ENCODE measurements at regions of chr2 and their contacts with region 1.

Region 1: GRCh38 chr2:208254871-208255556 is at the start of gene IDH1:
- DNase-seq: peak; percentile 96
- H3K4me3 Mint-ChIP-seq: peak within 1 kb of the TSS; percentile 86
- H3K27ac Mint-ChIP-seq: peak within 1 kb of the TSS; percentile 55
- H3K4me1 Mint-ChIP-seq: peaks cover 18% of the 10 kb centered on the region
- H3K27me3 Mint-ChIP-seq: no peaks in the 10 kb centered on the region
- total RNA-seq, gene IDH1: 18.5 to 21.9 TPM

Region 2: DNA sequence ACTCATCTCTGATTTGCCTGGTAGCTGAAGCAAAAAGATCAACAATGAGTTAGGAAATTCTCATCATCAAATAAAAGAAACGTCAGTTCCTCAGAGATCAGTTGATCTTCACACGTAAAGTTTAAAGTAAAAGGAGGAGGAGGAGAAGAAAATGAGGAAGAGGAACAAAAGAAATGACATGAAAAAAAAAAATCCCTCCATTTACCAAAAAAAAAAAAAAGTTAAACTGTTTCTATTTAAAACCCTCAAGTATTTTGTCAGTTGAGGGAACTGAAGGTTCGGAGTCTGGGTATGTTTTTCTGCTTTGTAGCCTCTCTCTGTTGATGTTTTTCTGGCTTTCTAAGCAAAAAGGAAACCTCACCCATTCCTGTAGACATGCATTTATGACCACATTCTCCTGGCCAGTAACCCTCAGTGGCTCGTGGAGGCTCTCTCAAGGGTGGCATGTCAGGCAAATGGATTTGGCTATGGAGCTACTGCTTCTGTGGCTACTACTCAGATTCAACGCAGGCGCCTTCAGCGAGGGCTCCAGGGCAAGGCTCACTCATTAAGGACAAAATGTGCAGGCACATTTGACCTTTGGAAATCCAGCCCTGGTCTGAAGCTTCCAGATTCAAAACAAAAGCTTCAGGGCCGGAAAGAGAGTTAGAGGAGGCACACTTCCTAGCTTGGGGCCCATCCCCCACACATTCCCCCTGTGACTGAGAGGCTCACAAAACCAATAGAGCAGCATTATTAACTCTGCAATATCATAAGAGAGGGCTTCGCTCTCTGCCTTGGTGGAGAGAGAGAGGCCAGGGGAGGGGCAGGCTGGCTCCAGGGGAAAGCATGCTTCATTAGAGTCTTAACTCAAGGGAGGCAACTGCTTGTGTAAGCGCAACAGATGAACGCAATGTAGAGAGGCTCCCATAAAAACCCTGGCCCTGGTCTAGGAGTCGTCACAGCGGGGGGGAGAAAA is 1111.5 kb before region 1 on chr2:
- CTCF ChIA-PET with region 1: no interaction called
- intact Hi-C with region 1: loop called (anchors 10 kb)
- DNase-seq: peak; percentile 78
- H3K4me3 Mint-ChIP-seq: peak overlapping the region; percentile 64
- H3K27ac Mint-ChIP-seq: peak overlapping the region; percentile 92
- H3K4me1 Mint-ChIP-seq: peaks cover 68% of the 10 kb centered on the region
- H3K27me3 Mint-ChIP-seq: no peaks in the 10 kb centered on the region

Region 3: DNA sequence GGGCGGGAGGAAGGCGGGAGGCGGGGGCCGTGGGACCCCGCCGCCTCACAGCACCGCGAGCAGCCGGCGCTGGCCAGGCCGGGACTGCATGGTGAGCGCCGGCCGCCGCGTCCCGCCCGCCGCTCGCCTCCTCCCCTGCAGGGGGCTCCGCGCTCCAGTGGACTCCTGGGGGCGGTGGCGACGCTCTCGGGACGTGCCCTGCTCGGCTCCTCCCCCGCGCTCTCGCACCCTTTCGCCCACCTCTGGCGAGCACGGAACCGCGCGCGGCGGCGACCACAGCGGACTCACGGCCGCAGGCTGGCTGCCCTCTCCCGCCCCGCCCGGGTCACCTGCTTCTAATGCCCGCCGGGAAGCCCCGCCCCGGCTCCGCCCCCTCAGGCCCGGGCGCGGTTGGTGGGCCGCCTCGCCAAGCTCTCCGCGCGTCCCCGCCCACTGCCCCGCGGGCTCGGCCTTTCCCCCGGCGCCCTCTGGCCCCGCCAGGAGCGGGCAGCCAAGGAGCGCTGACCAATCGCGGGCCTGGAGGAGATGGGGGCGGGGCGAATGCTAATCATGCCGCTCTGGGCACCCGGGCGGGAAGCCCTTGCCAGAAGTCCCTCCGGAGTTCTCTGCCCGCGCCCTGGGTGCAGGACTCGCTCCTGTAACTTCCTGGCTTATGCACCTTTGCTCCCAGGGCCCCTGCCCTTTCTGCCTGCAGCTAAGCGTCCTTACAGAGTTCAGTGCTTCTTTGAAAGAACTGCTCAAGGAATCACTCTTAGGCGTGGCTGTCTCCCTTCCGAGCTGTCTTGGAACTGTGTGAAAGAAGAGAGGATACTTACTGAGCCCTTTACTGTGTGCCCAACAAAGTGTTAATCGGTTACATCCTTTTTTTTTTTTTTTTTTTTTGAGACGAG is 485.2 kb before region 1 on chr2 and contains the start of gene FZD5:
- CTCF ChIA-PET with region 1: no interaction called
- intact Hi-C with region 1: loop called (anchors 5 kb)
- DNase-seq: peak; percentile 91
- H3K4me3 Mint-ChIP-seq: peak within 1 kb of the TSS; percentile 80
- H3K27ac Mint-ChIP-seq: no peak within 1 kb of the TSS
- H3K4me1 Mint-ChIP-seq: peaks cover 31% of the 10 kb centered on the region
- H3K27me3 Mint-ChIP-seq: peaks cover 36% of the 10 kb centered on the region
- total RNA-seq, gene FZD5: 1.5 to 1.7 TPM

Region 4: DNA sequence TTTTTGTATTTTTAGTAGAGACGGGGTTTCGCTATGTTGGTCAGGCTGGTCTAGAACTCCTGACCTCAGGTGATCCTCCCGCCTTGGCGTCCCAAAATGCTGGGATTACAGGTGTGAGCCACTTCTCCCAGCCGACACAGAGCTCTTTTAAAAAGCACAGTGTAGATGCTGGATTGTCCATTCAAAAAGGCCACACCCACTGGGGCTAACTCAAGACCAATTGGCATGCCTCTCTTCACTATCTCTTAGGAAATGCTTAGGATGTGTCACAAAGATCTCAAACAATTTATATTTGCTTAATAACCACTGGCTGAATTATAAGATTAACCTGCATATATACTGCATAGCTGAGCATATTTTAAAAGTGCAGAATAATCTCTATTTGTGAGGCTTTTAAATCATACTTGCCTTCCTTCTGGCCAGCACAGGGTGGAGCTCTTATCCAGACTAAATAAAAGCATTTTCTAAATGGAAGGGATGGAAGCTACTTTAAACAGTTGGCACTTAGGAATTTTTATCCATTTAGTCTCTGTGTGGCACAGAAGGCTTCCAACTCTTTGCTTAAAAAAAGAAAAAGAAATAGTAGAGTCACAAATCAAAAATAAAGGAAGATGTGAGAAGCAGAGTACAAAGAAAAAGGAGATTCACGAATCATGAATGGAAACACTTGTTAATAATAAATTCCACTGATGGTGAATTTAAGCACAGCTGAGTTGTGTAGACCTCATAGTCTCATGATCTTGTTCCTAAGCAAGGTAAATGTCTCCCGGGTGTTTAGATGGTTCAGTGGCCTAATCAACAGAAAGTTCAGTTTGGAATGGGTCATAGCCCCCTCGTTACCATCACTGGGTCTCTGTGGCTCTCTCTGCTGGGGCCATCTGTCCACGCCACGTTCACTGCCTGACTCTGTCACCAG is 153.0 kb before region 1 on chr2:
- CTCF ChIA-PET with region 1: interaction called, 8 read pairs
- intact Hi-C with region 1: loop called (anchors 1 kb)
- DNase-seq: no peak
- H3K4me3 Mint-ChIP-seq: no peak overlapping the region
- H3K27ac Mint-ChIP-seq: no peak overlapping the region
- H3K4me1 Mint-ChIP-seq: peaks cover 8% of the 10 kb centered on the region
- H3K27me3 Mint-ChIP-seq: peaks cover 2% of the 10 kb centered on the region

Region 5: DNA sequence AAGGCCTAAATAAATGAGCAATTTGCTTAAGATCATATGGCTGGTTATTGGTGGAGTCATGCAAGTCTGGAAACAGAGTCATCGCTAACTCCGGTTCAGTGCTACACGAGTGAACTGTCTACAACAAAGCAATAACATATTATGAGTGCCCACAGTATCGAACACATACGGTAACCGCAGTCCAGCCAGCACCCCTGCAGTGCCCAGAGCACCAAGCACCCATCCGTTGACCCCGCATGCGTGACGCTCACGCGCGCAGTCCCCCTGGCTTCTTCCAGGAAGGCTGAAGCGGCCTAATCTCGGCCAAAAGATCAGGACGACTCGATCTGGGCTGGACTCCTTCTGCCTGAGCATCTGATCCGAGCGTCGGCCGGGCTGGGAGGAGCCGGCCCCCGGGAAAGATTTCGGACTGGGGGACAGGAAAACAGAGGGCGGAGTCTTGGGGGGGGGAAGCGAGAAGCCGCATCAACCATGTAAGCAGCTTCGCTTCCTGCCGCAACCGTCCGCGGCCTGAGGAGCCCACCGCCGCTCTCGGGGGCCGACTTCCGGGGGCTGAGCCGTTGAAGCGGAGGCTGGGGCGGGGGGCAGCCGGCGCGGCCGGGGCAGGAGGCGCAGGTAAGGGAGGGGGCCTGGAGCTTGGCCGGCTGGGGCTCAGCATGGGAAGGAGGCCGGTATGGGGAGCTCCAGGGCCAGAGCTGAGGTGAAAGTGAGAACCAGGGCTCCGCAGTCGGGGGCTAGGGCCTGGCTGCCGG is 11.0 kb after region 1 on chr2 and contains the start of gene PIKFYVE:
- CTCF ChIA-PET with region 1: interaction called, 16 read pairs
- intact Hi-C with region 1: loop called (anchors 1 kb)
- DNase-seq: peak; percentile 94
- H3K4me3 Mint-ChIP-seq: peak within 1 kb of the TSS; percentile 95
- H3K27ac Mint-ChIP-seq: peak within 1 kb of the TSS; percentile 94
- H3K4me1 Mint-ChIP-seq: peaks cover 33% of the 10 kb centered on the region
- H3K27me3 Mint-ChIP-seq: no peaks in the 10 kb centered on the region
- total RNA-seq, gene PIKFYVE: 20.2 to 22.4 TPM